ENCODE measurements at regions of chr4 and their contacts with region 1.

Region 1: DNA sequence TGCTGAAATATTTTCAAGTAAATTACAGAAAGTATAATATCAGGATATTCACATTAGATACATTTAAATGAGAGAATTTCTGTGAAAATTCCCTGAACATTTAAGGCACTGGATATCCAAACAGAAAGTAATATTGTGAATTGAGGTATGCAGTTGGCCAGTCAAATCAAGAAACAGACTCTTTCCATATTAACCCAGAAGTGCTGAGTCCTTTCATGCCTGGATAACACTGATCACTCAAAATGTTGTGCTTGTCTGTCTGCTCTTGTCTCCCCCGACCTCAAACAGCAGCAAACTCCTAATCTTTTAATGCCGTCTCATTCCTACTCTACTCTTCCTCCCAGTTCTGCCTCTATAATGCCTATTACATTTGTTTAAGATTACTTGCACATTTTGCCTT is 51.2 kb downstream of the TBC1D9 start:
- DNase-seq: no peak
- H3K4me3 ChIP-seq: no peak overlapping the region
- H3K27ac ChIP-seq: peak overlapping the region; percentile 19 to 39
- H3K4me1 ChIP-seq: peaks cover 0 to 17% of the 10 kb centered on the region in 2 donors
- H3K27me3 ChIP-seq: no peaks in the 10 kb centered on the region
- CTCF ChIP-seq: no peak
- POLR2A ChIP-seq: no peak

Region 2: DNA sequence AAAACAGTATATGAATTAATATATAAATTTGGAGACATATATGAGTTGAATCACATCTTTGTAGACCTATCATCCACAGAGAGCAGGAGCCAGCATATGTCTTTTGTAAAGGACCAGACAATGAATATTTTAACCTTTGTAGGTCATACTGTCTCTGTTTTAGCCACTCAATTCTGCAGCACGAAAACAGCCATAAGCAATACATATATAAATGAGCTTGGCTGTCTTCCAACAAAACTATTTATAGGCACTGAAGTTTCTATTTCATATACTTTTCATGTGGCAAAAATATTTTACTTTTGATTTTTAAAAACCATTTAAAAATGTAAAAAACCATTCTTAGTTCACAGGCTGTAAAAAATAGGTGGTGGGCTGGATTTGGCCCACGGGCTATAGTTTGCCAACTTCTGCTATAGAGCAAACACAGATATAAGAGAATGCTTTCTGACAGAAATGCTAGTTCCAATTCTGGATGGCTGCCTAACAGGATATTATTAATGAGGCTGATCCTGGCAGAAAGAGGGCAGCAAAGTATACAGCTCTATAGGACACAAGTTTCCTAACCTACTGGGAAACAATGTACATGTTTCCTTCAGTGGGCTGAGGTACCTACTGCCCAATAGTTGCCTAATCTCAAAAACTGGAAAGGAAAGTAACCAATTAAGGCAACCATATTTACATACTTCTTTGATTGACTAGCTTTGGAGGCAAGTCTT is 78.1 kb before region 1 on chr4:
- intact Hi-C with region 1: no loop called
- DNase-seq: no peak
- H3K4me3 ChIP-seq: no peak overlapping the region
- H3K27ac ChIP-seq: no peak overlapping the region
- H3K4me1 ChIP-seq: no peaks in the 10 kb centered on the region
- H3K27me3 ChIP-seq: no peaks in the 10 kb centered on the region
- CTCF ChIP-seq: no peak
- POLR2A ChIP-seq: no peak

Region 3: DNA sequence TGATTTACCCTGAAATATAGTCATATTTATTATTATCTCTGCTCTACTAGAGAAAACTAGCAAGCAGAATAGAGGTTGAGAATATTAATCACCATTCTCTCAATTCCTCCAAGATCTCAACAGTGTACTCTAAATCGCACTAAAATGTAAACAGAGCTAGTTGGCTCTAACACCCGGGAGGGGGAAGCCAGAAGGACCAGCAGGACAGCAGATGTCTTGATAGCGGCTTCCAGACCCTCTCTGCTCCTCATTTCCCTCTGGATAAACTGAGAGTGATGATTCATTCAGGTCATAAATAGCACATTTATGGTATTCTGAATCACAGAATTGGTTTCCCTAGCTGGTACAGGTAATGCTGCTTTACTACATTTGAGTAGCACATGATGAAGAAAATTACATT is 31.2 kb before region 1 on chr4:
- intact Hi-C with region 1: loop called (anchors 1 kb)
- DNase-seq: no peak
- H3K4me3 ChIP-seq: no peak overlapping the region
- H3K27ac ChIP-seq: no peak overlapping the region
- H3K4me1 ChIP-seq: no peaks in the 10 kb centered on the region
- H3K27me3 ChIP-seq: no peaks in the 10 kb centered on the region
- CTCF ChIP-seq: no peak
- POLR2A ChIP-seq: no peak

Region 4: DNA sequence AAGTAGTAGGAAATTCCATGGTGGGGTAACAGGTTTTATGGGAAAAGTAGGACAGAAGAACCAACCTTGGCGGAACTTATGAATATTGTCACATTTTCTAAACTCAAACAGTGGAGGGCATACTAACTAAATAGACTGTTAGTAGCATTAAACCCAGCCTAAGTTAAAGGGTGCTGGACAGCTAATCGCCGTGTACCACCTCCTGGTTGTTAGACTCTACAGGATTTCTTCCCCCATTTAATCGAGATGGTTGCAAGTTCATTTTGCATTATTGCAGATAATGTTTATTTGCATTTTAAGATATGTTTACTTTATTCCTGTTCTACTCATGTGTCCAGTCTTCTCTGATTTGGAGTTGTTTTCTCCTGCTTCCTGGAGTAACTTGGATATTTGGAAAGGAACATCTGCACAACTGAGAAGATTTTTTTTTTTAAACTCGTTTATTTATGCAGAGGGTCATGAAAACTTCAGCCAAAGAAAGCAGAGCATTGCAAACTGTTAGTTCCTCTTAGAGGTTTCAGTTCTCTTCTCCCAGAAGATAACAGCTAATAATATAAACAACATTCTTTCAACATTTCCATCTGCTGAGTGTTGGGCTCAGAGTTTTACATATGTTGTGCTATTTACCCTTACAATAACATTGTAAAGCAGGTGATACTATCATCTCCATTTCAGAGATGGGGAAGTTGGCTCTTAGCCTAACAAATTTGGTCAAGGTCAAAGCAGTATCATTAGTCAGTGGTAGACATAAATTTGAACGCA is 102.7 kb after region 1 on chr4:
- intact Hi-C with region 1: no loop called
- DNase-seq: no peak
- H3K4me3 ChIP-seq: no peak overlapping the region
- H3K27ac ChIP-seq: no peak overlapping the region
- H3K4me1 ChIP-seq: no peaks in the 10 kb centered on the region
- H3K27me3 ChIP-seq: no peaks in the 10 kb centered on the region
- CTCF ChIP-seq: no peak
- POLR2A ChIP-seq: no peak

Measured in breast epithelium (tissue), 4 donors.